ENCODE measurements at regions of chr11 and their contacts with region 1.

Region 1: GRCh38 chr11:73982969-73983740 is 512 bp upstream of the UCP2 start:
- DNase-seq: peak; percentile 96
- H3K4me3 Mint-ChIP-seq: peak overlapping the region; percentile 98
- H3K27ac Mint-ChIP-seq: peak overlapping the region; percentile 99
- H3K4me1 Mint-ChIP-seq: peaks cover 45% of the 10 kb centered on the region
- H3K27me3 Mint-ChIP-seq: no peaks in the 10 kb centered on the region

Region 2: DNA sequence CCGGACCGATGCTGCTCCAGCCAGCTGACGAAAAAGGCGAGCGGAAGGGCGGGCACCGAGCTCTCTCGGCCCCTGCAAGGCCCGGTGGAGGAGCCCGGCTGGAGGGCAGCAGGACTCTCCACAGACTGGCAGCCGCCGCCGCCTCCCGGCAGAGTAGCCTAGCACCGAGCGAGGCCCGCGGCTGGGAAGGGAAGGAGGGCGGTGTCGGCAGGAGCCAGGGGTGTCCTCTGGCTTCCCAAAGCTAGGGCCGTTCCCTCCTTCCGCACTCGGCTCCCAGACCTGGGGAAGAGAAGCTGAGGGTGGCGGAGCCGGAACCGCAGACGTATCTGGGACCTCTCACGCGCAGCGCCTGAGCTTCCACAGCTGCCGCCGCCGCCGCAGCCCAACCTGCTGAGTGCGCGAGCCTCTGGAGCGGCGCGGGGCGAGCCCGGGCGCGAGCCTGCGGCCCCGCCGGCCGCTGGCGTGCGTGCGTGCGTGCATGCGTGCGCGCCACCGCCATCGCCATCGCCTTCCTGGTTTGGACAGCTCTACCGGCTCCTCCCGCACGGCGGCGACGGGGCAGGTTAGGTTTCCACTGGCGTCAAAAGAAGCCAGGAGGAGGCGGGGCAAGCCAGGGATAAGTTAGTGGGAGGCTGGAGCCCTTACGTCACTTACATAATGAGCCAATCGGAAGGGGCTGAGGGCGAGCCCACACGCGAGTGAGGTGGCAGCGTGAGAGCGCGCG is 222.3 kb before region 1 on chr11 and contains the start of gene RAB6A:
- CTCF ChIA-PET with region 1: no interaction called
- intact Hi-C with region 1: loop called (anchors 1 kb)
- DNase-seq: peak; percentile 100
- H3K4me3 Mint-ChIP-seq: peak within 1 kb of the TSS; percentile 88
- H3K27ac Mint-ChIP-seq: peak within 1 kb of the TSS; percentile 90
- H3K4me1 Mint-ChIP-seq: peaks cover 34% of the 10 kb centered on the region
- H3K27me3 Mint-ChIP-seq: no peaks in the 10 kb centered on the region
- total RNA-seq, gene RAB6A: 36.7 to 41.2 TPM

Region 3: GRCh38 chr11:73995247-73995646 is 12.1 kb after region 1 on chr11:
- CTCF ChIA-PET with region 1: interaction called, 12 read pairs
- intact Hi-C with region 1: loop called (anchors 1 kb)
- DNase-seq: no peak
- H3K4me3 Mint-ChIP-seq: peak overlapping the region; percentile 44
- H3K27ac Mint-ChIP-seq: peak overlapping the region; percentile 85
- H3K4me1 Mint-ChIP-seq: peaks cover 68% of the 10 kb centered on the region
- H3K27me3 Mint-ChIP-seq: no peaks in the 10 kb centered on the region

Region 4: DNA sequence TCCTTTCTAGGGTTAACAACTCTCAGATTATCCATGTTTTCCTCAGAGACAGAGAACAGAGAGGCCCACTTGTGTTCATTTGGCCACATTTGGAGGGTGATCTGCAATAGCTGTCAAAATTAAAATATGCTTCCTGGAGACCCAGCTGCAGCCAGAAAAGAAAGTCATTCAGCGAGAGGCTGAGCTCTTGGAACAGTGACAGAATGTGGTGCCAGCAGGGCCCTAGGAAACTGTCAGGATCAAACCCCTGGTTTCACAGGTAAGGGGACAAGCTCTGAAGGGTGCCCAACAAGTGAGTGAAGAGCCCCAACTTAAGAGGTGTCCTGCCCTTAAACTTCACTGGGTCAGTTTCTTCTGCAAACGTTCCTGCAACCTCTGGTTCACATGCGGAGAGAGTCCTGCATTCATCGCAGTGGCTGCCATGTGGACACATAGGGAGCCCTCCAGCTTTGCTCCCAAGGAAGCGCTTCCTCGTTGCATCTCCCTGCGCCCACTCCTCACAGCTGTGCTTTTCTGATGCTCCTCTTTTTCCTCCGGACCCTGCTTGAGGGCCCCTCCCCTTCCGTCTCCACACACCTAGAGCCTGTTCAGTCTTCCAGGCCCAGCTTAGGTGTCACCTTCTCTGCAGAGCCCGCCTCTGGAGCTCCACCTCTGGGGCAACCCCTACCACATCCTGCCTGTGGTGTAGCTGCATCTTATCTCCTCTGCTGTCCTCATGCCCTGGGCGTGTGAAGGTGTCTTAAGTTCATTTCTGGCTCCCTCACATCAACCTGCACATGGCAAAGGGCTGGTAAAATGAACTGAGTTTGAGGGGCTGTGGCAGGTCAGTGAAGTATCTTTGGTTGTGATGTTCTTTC is 21.8 kb after region 1 on chr11:
- CTCF ChIA-PET with region 1: interaction called, 10 read pairs
- intact Hi-C with region 1: loop called (anchors 1 kb)
- DNase-seq: peak; percentile 95
- H3K4me3 Mint-ChIP-seq: peak overlapping the region; percentile 56
- H3K27ac Mint-ChIP-seq: peak overlapping the region; percentile 88
- H3K4me1 Mint-ChIP-seq: peaks cover 51% of the 10 kb centered on the region
- H3K27me3 Mint-ChIP-seq: no peaks in the 10 kb centered on the region

Region 5: GRCh38 chr11:74011360-74012073 is 28.4 kb after region 1 on chr11:
- CTCF ChIA-PET with region 1: interaction called, 10 read pairs
- intact Hi-C with region 1: loop called (anchors 1 kb)
- DNase-seq: peak; percentile 72
- H3K4me3 Mint-ChIP-seq: no peak overlapping the region
- H3K27ac Mint-ChIP-seq: peak overlapping the region; percentile 92
- H3K4me1 Mint-ChIP-seq: peaks cover 77% of the 10 kb centered on the region
- H3K27me3 Mint-ChIP-seq: no peaks in the 10 kb centered on the region

Measured in activated naive CD4-positive, alpha-beta T cell treated with anti-CD3 and anti-CD28 coated beads for 36 hours (primary cell).